ENCODE measurements at regions of chr2 and their contacts with region 1.

Region 1: DNA sequence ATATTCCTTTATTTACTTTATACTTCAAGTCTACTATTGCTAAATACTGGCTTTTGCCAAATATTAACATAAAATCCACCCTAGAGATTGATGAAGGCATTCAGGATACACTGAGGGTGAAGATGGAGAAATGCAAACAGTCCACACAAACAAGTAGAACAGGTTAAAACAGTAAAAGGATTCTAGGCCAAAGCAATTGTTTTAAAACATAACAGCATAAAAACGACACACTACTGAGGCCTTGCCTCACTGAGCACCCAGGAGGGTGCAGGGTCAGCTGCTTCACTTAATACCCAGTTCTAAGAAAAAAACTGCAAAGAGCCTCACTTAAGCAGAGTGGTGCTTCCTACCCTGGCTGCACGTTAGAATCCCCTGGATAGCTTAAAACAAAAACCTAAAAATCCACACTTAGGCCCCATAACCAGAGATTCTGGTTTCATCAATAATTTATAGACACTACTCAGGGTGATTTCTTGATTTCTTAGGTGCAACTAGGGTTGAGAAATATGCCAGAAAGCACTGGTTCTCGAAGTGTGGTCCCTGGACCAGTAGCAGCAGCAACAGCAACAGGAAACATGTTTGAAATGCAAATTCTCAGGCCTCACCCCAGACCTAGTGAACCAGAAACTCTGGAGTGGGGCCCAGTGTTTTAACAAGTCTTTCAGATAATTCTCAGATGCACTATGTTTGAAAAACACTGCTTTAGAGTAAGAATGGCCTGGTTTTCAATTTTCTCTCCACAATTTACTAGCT is 279.2 kb downstream of the ZEB2 start:
- DNase-seq: peak; percentile 92
- H3K4me3 ChIP-seq: peak overlapping the region; percentile 55
- H3K27ac ChIP-seq: peak overlapping the region; percentile 98
- H3K4me1 ChIP-seq: peaks cover 92% of the 10 kb centered on the region
- CTCF ChIP-seq: no peak

Region 2: DNA sequence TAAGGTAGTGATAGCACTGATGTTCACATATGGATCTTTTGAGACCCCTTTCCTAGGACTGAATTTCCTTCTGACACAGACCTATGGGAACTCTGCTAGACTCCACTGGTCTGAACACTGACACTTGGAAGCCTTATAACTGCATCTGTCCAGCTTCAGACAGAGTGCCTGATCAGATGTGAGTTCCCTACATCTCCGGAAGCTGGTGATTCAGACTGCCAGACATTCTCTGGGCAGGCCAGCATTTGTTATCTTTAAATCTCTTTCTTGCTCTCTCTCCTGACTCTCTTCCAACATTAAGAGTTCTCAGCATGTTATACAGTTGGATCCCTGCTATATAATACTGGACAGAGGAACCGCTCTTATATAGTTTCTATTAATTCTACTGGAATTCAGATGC is 129.3 kb before region 1 on chr2:
- CTCF ChIA-PET with region 1: no interaction called
- POLR2A ChIA-PET with region 1: no interaction called
- intact Hi-C with region 1: no loop called
- DNase-seq: no peak
- H3K4me3 ChIP-seq: no peak overlapping the region
- H3K27ac ChIP-seq: no peak overlapping the region
- H3K4me1 ChIP-seq: no peaks in the 10 kb centered on the region
- CTCF ChIP-seq: no peak

Region 3: DNA sequence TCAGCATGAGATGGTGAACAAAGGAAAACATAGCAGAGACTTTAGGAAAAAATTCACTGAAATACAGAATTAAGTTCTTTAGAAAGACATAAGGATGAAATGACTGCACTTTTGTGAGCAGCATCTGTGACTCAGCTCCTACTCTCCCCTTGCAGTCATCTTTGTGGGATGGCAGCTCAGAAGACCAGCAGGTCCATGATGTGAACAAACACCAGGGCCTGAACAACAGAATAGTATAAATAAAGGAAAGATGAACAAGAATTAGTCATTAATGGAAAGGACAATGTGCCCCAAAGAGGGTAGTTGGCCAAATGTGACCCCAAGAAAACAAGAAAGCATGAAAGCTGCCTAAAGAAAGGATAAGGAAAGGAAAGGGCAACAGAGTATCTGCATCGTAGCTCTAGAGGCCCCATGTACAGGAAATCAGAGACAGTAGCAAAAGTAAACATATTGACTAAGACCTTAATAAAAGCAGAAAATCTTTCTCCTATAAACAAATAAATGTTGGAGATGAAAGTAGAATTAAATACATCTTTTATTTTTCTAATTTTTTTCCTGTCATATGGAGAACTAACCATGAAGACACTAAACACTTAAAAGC is 38.8 kb before region 1 on chr2:
- CTCF ChIA-PET with region 1: no interaction called
- POLR2A ChIA-PET with region 1: interaction called, 12 read pairs
- intact Hi-C with region 1: no loop called
- DNase-seq: no peak
- H3K4me3 ChIP-seq: no peak overlapping the region
- H3K27ac ChIP-seq: no peak overlapping the region
- H3K4me1 ChIP-seq: peaks cover 5% of the 10 kb centered on the region
- CTCF ChIP-seq: no peak

Region 4: DNA sequence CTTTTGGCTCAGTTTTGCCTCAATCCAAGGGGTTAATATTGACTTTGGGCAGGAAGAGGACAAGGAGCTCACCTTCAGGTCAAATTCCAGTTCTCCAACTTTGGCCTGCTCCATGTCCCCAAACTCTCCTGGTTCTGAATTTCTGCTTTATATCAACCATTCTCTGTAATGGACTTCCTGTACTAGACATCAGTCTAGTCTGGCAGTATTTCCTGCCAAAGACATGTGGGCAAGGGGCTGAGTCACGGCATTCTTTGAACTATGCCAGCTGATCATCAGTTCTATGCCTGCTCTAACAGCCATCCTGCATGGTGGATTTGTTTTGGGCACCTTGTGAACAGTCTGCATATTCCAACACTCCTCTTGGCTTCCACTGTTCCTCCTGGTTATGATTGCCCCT is 79.7 kb after region 1 on chr2:
- CTCF ChIA-PET with region 1: no interaction called
- POLR2A ChIA-PET with region 1: interaction called, 11 read pairs
- intact Hi-C with region 1: no loop called
- DNase-seq: peak; percentile 49
- H3K4me3 ChIP-seq: no peak overlapping the region
- H3K27ac ChIP-seq: no peak overlapping the region
- H3K4me1 ChIP-seq: peaks cover 43% of the 10 kb centered on the region
- CTCF ChIP-seq: no peak

Region 5: GRCh38 chr2:144516981-144517865 is 276.5 kb after region 1 on chr2:
- CTCF ChIA-PET with region 1: no interaction called
- POLR2A ChIA-PET with region 1: interaction called, 3 read pairs
- intact Hi-C with region 1: loop called (anchors 2 kb)
- DNase-seq: peak; percentile 64
- H3K4me3 ChIP-seq: peak overlapping the region; percentile 83
- H3K27ac ChIP-seq: no peak overlapping the region
- H3K4me1 ChIP-seq: peaks cover 36% of the 10 kb centered on the region
- CTCF ChIP-seq: no peak

Region 6: GRCh38 chr2:144541396-144541795 is 300.6 kb after region 1 on chr2:
- CTCF ChIA-PET with region 1: no interaction called
- POLR2A ChIA-PET with region 1: no interaction called
- intact Hi-C with region 1: no loop called
- DNase-seq: no peak
- H3K4me3 ChIP-seq: no peak overlapping the region
- H3K27ac ChIP-seq: no peak overlapping the region
- H3K4me1 ChIP-seq: peaks cover 3% of the 10 kb centered on the region
- CTCF ChIP-seq: no peak

Region 7: DNA sequence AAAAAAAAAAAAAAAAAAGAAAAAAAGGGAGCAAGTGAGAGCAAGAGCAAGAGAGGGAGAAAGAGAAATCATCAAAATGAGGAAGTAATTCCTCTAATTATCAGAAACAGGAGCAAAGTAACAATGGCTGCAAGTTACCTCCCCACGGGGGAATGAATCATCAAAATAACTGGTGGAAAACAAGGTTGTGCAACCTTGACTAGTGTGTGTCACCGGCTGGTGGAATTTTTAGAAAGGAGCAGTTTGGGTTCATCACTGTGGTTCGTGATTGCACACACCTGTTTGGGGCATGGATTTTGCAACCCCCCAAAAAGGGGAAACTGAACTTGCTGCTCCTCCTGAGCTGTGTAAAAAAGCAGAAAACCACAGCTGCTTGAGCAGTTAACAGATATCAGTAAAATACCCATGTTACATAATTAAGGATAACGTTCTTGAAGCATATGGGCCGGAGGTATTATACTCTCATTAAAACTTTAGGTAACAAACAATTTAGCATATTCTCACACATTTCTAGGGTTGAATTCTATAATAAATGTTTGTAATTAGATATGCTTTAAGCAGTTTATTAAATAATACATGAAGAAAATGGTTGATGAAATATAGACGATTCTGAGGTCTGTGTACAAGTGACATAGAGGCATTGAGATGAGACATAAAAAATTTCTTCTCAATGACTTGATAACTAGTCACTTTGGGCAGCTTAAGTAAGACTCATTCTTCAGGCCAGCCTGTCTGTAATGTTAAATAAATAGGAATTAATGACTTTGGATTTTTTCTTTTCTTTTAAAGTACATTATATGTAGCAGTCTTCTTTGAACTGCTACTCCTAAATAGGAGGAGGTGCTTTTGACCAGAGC is 463.3 kb after region 1 on chr2:
- CTCF ChIA-PET with region 1: no interaction called
- POLR2A ChIA-PET with region 1: no interaction called
- intact Hi-C with region 1: loop called (anchors 5 kb)
- DNase-seq: peak; percentile 97
- H3K4me3 ChIP-seq: peak overlapping the region; percentile 51
- H3K27ac ChIP-seq: peak overlapping the region; percentile 98
- H3K4me1 ChIP-seq: peaks cover 58% of the 10 kb centered on the region
- CTCF ChIP-seq: no peak